ENCODE measurements at regions of chr20 and their contacts with region 1.

Region 1: GRCh38 chr20:54340667-54341081 is 132.8 kb downstream of the PFDN4 start:
- DNase-seq: peak; percentile 96
- H3K4me3 ChIP-seq: peak overlapping the region in 2 of 3 experiments; percentile 12 to 48
- H3K27ac ChIP-seq: peak overlapping the region; percentile 90
- H3K4me1 ChIP-seq: peaks cover 48% of the 10 kb centered on the region
- H3K27me3 ChIP-seq: no peaks in the 10 kb centered on the region
- CTCF ChIP-seq: no peak
- POLR2A ChIP-seq: no peak

Region 2: DNA sequence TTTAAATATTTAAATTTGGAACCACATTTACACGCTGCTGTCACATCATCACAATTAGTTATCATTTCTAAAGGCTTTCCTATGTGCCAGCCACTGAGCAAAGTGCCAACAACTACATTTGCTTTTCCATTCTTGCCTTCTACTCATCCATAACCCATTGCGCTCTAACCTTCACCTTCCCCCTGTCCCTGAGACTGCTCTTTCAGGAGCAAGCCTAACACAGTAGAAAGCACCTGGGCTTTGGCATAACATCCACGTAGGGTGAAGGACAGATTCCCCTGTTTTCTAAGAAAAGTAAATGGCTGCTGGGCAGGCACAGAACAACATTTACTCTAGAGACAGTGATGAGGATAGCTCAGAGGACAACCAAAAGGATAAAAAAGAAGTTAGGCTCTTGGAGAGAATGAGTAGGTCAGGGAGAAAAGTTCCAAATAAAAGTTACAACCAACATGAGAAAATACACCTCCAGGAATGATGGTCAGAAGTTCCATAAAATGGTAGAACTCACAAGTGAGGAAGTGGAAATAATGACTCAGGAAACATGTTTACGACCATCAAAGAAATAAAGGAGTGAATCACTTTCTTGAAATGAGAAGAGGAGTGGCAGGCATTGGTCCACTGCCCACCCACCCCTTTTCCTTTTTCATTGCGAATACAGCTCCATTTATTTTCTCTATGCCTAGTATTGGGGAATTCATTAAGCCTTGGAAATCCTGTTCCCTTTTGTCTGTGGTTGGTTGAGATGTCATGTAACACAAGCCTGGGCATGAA is 55.6 kb before region 1 on chr20:
- CTCF ChIA-PET with region 1: no interaction called
- POLR2A ChIA-PET with region 1: no interaction called
- dilution Hi-C with region 1: no loop called
- intact Hi-C with region 1: loop called (anchors 2 kb)
- DNase-seq: peak; percentile 74
- H3K4me3 ChIP-seq: no peak overlapping the region
- H3K27ac ChIP-seq: no peak overlapping the region
- H3K4me1 ChIP-seq: peaks cover 6% of the 10 kb centered on the region
- H3K27me3 ChIP-seq: no peaks in the 10 kb centered on the region
- CTCF ChIP-seq: no peak
- POLR2A ChIP-seq: no peak

Region 3: GRCh38 chr20:54475334-54476168 is 134.9 kb after region 1 on chr20 and contains the start of gene DOK5:
- CTCF ChIA-PET with region 1: no interaction called
- POLR2A ChIA-PET with region 1: no interaction called
- dilution Hi-C with region 1: no loop called
- intact Hi-C with region 1: loop called (anchors 2 kb)
- DNase-seq: peak; percentile 29
- H3K4me3 ChIP-seq: peak within 1 kb of the TSS; percentile 51 to 75 (median 62)
- H3K27ac ChIP-seq: no peak within 1 kb of the TSS
- H3K4me1 ChIP-seq: peaks cover 9% of the 10 kb centered on the region
- H3K27me3 ChIP-seq: peaks cover 4 to 17% of the 10 kb centered on the region in 2 experiments
- CTCF ChIP-seq: no peak
- POLR2A ChIP-seq: no peak
- total RNA-seq, gene DOK5: 5.7 and 14.2 TPM in 2 replicates

Region 4: DNA sequence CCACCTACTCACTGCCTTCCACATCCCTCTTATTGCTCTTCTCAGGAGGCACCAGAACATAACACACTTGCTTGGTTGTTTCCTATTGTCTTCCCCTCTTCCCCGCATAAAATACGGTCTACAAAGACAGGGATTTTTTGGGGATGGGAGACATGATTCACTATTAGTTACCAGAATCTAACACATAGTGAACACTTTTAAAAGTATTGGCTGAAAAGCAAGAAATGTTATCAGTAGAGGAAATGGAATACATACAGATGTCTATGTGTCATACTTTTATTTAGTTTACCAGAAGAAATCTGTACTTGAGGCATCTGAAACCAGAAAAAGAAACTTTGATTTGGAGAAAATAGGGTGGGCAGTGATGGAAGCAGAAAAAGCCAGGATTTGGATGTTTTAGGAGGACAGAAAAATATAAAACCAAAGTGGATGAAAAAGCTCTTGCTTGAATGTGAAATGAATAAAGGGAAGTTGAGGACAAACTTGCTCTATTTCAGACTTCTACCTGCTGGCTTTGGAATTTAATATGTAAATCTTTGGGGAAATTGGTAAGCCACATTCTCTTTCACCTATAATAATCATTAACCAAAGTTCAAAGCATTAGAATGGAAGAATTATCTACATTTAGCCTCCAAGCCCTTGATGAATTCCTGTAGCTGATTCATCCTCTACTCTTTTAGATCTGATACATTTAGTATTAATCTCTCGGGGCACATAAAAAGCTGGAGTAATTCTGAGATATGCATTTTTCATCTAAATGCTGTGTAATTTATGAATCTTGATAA is 217.3 kb after region 1 on chr20:
- CTCF ChIA-PET with region 1: interaction called, 4 read pairs
- POLR2A ChIA-PET with region 1: no interaction called
- dilution Hi-C with region 1: no loop called
- intact Hi-C with region 1: loop called (anchors 1 kb)
- DNase-seq: peak; percentile 47
- H3K4me3 ChIP-seq: peak overlapping the region in 1 of 3 experiments; percentile 36
- H3K27ac ChIP-seq: peak overlapping the region; percentile 59
- H3K4me1 ChIP-seq: peaks cover 37% of the 10 kb centered on the region
- H3K27me3 ChIP-seq: no peaks in the 10 kb centered on the region
- CTCF ChIP-seq: no peak
- POLR2A ChIP-seq: no peak